Aorta (tissue), 5 donors: ENCODE measurements at regions of chr6 and their contacts with region 1.

Region 1: GRCh38 chr6:19035461-19036195 is 648.5 kb downstream of the RNF144B start:
- DNase-seq: peak in 1 of 2 donors; percentile 32
- ATAC-seq: peak; percentile 41
- H3K4me3 ChIP-seq: no peak overlapping the region
- H3K27ac ChIP-seq: peak overlapping the region; percentile 28 to 76
- H3K4me1 ChIP-seq: peaks cover 3 to 5% of the 10 kb centered on the region in 2 donors
- H3K27me3 ChIP-seq: no peaks in the 10 kb centered on the region

Region 2: GRCh38 chr6:19083809-19084208 is 48.2 kb after region 1 on chr6:
- intact Hi-C with region 1: no loop called
- DNase-seq: no peak
- ATAC-seq: no peak
- H3K4me3 ChIP-seq: no peak overlapping the region
- H3K27ac ChIP-seq: no peak overlapping the region
- H3K4me1 ChIP-seq: no peaks in the 10 kb centered on the region
- H3K27me3 ChIP-seq: no peaks in the 10 kb centered on the region

Region 3: GRCh38 chr6:19410481-19410880 is 374.9 kb after region 1 on chr6:
- intact Hi-C with region 1: loop called in 1 of 2 experiments (anchors 10 kb)
- DNase-seq: no peak
- ATAC-seq: no peak
- H3K4me3 ChIP-seq: no peak overlapping the region
- H3K27ac ChIP-seq: no peak overlapping the region
- H3K4me1 ChIP-seq: peaks cover 1 to 2% of the 10 kb centered on the region in 2 donors
- H3K27me3 ChIP-seq: no peaks in the 10 kb centered on the region